ENCODE measurements at regions of chr2 and their contacts with region 1.

Region 1: GRCh38 chr2:133579274-133579673 is 11.0 kb upstream of the NCKAP5 start:
- DNase-seq: peak; percentile 96
- ATAC-seq: peak; percentile 85
- H3K4me3 ChIP-seq: peak overlapping the region; percentile 37; the same call in 1 of the 2 replicates
- H3K27ac ChIP-seq: peak overlapping the region; percentile 31
- H3K4me1 ChIP-seq: peaks cover 64% of the 10 kb centered on the region
- H3K27me3 ChIP-seq: no peaks in the 10 kb centered on the region
- CTCF ChIP-seq: no peak

Region 2: DNA sequence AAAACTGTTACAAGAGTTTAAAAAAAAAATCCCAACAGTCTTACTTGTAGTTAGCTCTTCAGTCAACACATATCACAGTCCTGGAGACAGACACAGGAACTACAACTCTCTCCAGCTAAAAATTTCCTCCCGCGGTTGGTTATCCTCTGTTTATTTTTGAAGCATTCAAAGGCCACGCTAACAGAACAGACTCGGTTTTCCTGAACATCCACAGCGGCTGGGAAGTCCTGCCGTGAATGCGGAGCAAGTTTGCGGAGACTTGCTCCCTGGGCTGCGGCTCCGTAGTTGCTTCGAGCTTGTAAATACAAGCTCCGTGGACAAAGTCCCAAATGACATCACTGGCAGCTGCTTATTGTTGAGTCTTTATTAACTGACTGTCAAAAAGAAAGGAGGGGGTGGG is 11.1 kb before region 1 on chr2 and contains the start of gene NCKAP5:
- CTCF ChIA-PET with region 1: no interaction called
- POLR2A ChIA-PET with region 1: no interaction called
- intact Hi-C with region 1: loop called (anchors 1 kb)
- DNase-seq: peak; percentile 59
- ATAC-seq: peak; percentile 59
- H3K4me3 ChIP-seq: peak within 1 kb of the TSS; percentile 69
- H3K27ac ChIP-seq: peak within 1 kb of the TSS; percentile 27
- H3K4me1 ChIP-seq: peaks cover 35% of the 10 kb centered on the region
- H3K27me3 ChIP-seq: no peaks in the 10 kb centered on the region
- CTCF ChIP-seq: no peak; the same call in 1 of the 2 replicates
- total RNA-seq, gene NCKAP5: 3.2 and 4.8 TPM in 2 replicates

Region 3: DNA sequence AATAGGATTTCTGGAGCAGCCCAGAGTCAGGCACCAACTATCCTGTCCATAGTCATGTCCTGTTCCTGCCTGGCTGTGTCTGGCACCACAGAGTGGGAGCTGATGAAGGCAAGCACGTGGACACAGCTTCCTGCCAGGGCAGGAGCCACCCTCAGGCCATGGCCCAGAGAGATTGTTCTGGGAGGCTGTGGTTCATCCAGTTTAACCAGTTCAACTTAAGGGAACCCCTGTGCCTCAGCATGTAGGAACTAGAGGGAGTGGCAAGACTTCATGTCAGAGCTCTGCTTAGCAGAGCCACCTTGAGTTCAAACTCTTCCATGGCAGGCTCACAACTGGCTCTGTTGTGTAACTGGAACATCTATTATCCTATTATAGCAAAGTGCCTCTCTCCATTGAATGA is 62.2 kb after region 1 on chr2:
- CTCF ChIA-PET with region 1: no interaction called
- POLR2A ChIA-PET with region 1: no interaction called
- intact Hi-C with region 1: loop called (anchors 2 kb)
- DNase-seq: peak; percentile 98
- ATAC-seq: peak; percentile 94
- H3K4me3 ChIP-seq: peak overlapping the region; percentile 46; the same call in 1 of the 2 replicates
- H3K27ac ChIP-seq: peak overlapping the region; percentile 72
- H3K4me1 ChIP-seq: peaks cover 33% of the 10 kb centered on the region
- H3K27me3 ChIP-seq: no peaks in the 10 kb centered on the region
- CTCF ChIP-seq: peak; percentile 80